ENCODE measurements at regions of chr16 and their contacts with region 1.

Region 1: DNA sequence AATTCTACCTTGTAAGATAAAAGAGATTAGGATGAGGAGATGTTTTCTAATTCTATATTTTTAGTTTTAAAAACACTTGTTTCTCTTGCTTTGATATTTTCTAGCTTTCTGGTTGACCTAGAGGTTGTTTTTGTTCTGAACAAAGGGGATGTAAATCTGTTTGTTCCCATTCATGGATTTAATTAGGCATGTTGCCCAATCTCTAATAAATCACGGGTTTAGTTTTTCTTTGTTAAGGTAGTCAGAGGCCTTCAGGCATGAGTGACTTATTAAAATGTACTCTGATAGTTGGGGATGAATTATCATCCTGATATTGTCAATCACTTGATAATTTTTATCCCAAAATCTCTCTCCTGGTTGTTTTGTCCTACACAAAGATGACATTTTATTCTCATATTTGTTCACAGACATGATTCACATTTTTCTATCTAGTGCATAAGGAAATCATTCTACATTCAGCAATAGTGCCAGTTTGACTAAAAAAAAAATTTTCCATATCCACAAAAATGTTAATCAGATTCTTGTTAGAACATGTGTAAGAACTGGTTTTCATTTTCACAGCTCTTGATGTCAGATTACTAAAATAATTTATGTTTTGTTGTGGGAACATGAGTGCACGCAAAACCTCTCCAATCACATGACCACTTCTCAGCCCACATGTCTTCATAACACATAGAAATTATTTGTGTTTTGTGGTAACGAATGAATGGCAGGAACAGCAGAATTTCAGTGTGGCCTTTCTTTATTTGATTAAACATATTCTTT is 95.7 kb upstream of the AKTIP start:
- DNase-seq: no peak
- H3K4me3 ChIP-seq: no peak overlapping the region
- H3K27ac ChIP-seq: no peak overlapping the region
- H3K4me1 ChIP-seq: no peaks in the 10 kb centered on the region
- H3K27me3 ChIP-seq: no peaks in the 10 kb centered on the region
- CTCF ChIP-seq: no peak
- EP300 ChIP-seq: no peak
- POLR2A ChIP-seq: no peak

Region 2: GRCh38 chr16:53654946-53655345 is 56.3 kb after region 1 on chr16:
- in situ Hi-C with region 1: no loop called
- intact Hi-C with region 1: no loop called
- DNase-seq: no peak
- H3K4me3 ChIP-seq: no peak overlapping the region
- H3K27ac ChIP-seq: no peak overlapping the region
- H3K4me1 ChIP-seq: no peaks in the 10 kb centered on the region
- H3K27me3 ChIP-seq: no peaks in the 10 kb centered on the region
- CTCF ChIP-seq: no peak
- EP300 ChIP-seq: no peak
- POLR2A ChIP-seq: no peak

Region 3: DNA sequence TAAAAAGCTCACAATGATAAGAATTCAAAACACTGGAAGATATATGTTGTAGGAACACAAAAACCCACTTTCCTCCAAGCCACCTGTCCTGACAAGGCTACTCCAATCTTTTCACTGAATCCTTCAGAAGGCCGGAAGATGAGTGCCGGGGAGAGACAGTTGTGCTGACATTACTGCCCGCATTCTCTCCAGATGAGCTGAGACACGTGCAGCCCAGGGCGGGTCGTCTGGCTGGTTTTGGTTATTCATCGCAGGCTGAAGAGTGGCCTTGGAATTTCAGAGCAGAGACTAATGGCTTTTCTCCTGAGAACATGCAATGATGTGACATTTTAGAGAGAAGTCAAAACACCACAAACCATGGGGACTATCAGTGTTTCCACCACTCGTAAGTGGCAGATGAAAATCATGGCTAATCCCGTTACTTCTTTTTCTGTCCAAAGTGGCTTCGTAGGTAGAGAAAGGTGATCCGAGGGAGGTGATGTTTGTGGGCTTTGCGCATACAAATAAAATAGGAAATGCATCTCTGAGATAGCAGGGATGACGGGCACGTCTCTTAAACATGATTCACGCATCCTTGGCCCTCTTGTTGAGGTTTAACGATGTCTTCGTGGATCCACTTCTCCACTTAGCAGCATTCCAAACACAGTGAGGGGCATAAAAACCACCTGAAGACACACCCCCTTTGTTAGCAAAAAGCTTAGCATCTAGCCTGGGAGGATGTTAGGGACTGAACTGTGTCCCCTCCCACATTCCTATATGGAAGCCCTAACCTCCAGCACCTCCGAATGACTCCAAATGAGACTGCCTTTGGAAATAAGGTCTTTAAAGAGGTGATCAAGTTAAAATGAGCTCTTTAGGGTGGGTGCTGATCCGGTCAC is 553.9 kb after region 1 on chr16:
- in situ Hi-C with region 1: no loop called
- intact Hi-C with region 1: loop called (anchors 5 kb)
- DNase-seq: no peak
- H3K4me3 ChIP-seq: no peak overlapping the region
- H3K27ac ChIP-seq: no peak overlapping the region
- H3K4me1 ChIP-seq: no peaks in the 10 kb centered on the region
- H3K27me3 ChIP-seq: peaks cover 3% of the 10 kb centered on the region
- CTCF ChIP-seq: no peak
- EP300 ChIP-seq: no peak
- POLR2A ChIP-seq: no peak